PC-9 (cell line): ENCODE measurements at regions of chr10 and their contacts with region 1.

Region 1: GRCh38 chr10:60834401-60834800 is 56.1 kb downstream of the CDK1 start:
- DNase-seq: no peak
- H3K4me3 ChIP-seq: no peak overlapping the region
- H3K27ac ChIP-seq: no peak overlapping the region
- H3K4me1 ChIP-seq: no peaks in the 10 kb centered on the region
- H3K27me3 ChIP-seq: no peaks in the 10 kb centered on the region
- CTCF ChIP-seq: no peak

Region 2: GRCh38 chr10:60989400-60989876 is 155.0 kb after region 1 on chr10:
- CTCF ChIA-PET with region 1: interaction called, 10 read pairs
- POLR2A ChIA-PET with region 1: no interaction called
- intact Hi-C with region 1: no loop called
- DNase-seq: no peak
- H3K4me3 ChIP-seq: no peak overlapping the region
- H3K27ac ChIP-seq: no peak overlapping the region
- H3K4me1 ChIP-seq: no peaks in the 10 kb centered on the region
- H3K27me3 ChIP-seq: no peaks in the 10 kb centered on the region
- CTCF ChIP-seq: no peak